ENCODE measurements at regions of chr6 and their contacts with region 1.

Region 1: GRCh38 chr6:32177788-32178546 is at the start of gene RNF5:
- DNase-seq: peak; percentile 89

Region 2: DNA sequence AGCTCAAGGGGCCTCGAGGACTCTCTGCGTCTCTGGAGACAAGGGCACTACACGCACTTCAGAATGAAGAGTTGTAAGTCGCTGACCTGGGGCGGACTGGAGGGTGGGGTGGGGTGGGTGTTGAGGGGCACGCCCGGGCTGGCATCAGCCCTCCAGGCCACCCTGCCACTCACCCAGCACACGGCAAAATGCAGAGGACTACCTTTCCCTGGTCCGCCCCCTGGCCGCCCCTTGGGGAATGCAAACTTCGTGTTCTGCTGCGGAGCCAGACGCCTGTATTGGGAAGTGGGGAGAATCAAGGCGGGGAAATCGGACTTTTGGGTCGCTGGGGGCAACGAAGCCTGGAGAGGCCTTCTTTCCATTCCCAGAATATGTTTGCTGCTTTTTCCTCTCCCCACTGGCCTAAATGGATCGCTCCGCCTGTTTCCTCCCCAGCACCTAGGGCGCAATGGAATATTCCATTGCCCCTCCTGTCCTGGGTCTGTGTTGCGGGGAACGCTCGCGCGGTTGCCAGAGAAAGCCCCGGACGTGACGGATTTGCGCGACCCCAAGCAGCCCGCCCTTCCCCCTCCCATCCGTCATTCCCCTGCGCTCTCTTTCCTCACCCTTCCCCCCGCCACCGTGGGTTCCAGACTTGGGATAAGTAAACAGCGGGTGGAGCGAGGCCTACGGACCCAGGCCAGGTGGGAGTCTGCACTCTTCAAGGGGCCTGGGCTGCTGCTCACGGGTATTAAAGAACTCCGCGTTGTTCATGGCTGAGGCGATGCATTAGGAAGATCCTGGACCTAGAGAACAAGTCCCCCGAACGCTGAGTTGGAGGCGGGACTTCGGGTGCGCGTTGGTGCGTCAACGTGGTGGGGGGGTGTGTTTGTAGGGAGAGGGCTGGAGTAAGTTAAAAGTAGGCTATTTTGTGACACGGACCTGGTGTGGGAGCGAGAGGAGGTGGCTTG is 24.1 kb before region 1 on chr6 and contains the start of gene PPT2:
- CTCF ChIA-PET with region 1: no interaction called
- POLR2A ChIA-PET with region 1: interaction called, 19 read pairs
- DNase-seq: peak; percentile 90

Region 3: DNA sequence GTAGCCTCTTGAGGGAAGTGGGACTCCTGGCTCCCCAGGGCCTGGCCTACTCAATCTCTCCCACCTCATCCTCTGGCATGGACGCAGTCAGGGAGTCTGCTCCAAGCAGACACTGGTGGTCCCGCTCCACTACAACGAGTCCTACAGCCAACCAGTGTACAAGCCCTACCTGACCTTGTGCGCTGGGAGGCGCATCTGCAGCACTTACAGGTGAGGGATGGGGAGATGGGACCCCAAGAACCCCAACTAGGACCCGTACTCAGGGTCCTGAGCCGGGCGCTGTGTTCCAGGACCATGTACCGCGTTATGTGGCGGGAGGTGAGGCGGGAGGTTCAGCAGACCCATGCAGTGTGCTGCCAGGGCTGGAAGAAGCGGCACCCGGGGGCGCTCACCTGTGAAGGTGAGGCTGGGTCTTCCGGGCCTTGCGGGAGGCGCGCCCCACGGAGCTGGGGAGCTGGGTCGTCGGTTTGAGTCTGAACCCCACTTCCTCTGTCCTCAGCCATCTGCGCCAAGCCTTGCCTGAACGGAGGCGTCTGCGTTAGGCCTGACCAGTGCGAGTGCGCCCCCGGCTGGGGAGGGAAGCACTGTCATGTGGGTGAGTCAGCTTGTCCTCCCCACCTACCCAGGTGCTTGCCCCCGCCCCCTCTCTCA is 11.4 kb before region 1 on chr6:
- CTCF ChIA-PET with region 1: no interaction called
- POLR2A ChIA-PET with region 1: interaction called, 19 read pairs
- DNase-seq: no peak

Region 4: DNA sequence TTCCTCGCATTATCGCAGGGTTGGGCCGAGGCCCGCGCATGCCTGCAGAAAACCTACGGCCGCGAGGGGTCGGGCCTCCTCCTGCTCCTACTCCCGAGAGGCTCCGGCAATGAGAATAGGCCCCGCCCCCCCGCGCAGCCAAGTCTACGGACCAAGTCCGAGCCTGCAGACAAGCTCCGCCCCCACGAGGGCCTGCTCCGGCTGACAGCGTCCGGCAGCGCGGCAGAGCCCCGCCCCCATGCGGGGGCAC is 17.6 kb after region 1 on chr6:
- CTCF ChIA-PET with region 1: interaction called, 4 read pairs
- POLR2A ChIA-PET with region 1: interaction called, 153 read pairs
- DNase-seq: peak; percentile 98

Measured in HEK293T (cell line).